ENCODE measurements at regions of chr11 and their contacts with region 1.

Region 1: GRCh38 chr11:124194698-124195410 is 11.7 kb downstream of the OR10D3 start:
- DNase-seq: no peak
- H3K4me3 ChIP-seq: no peak overlapping the region
- H3K27ac ChIP-seq: peak overlapping the region; percentile 10 to 29 (median 13)
- H3K4me1 ChIP-seq: peaks cover 0 to 6% (median 0%) of the 10 kb centered on the region in 4 donors
- H3K27me3 ChIP-seq: no peaks in the 10 kb centered on the region
- CTCF ChIP-seq: peak; percentile 35 to 54 (median 46)
- EP300 ChIP-seq: no peak
- POLR2A ChIP-seq: no peak

Region 2: GRCh38 chr11:123885570-123885969 is 309.3 kb before region 1 on chr11 and contains the start of gene TMEM225:
- intact Hi-C with region 1: no loop called
- DNase-seq: no peak
- H3K4me3 ChIP-seq: no peak within 1 kb of the TSS
- H3K27ac ChIP-seq: no peak within 1 kb of the TSS
- H3K4me1 ChIP-seq: no peaks in the 10 kb centered on the region
- H3K27me3 ChIP-seq: no peaks in the 10 kb centered on the region
- CTCF ChIP-seq: no peak
- EP300 ChIP-seq: no peak
- POLR2A ChIP-seq: no peak
- total RNA-seq, gene TMEM225: not detected

Region 3: GRCh38 chr11:123939317-123939716 is 255.5 kb before region 1 on chr11 and contains the start of gene OR4D5:
- intact Hi-C with region 1: no loop called
- DNase-seq: no peak
- H3K4me3 ChIP-seq: no peak within 1 kb of the TSS
- H3K27ac ChIP-seq: no peak within 1 kb of the TSS
- H3K4me1 ChIP-seq: no peaks in the 10 kb centered on the region
- H3K27me3 ChIP-seq: no peaks in the 10 kb centered on the region
- CTCF ChIP-seq: no peak
- EP300 ChIP-seq: no peak
- POLR2A ChIP-seq: no peak
- total RNA-seq, gene OR4D5: not detected

Region 4: GRCh38 chr11:124026498-124026897 is 168.4 kb before region 1 on chr11 and contains the start of gene OR10G8:
- intact Hi-C with region 1: no loop called
- DNase-seq: no peak
- H3K4me3 ChIP-seq: no peak within 1 kb of the TSS
- H3K27ac ChIP-seq: no peak within 1 kb of the TSS
- H3K4me1 ChIP-seq: no peaks in the 10 kb centered on the region
- H3K27me3 ChIP-seq: no peaks in the 10 kb centered on the region
- CTCF ChIP-seq: no peak
- EP300 ChIP-seq: no peak
- POLR2A ChIP-seq: no peak
- total RNA-seq, gene OR10G8: not detected

Region 5: DNA sequence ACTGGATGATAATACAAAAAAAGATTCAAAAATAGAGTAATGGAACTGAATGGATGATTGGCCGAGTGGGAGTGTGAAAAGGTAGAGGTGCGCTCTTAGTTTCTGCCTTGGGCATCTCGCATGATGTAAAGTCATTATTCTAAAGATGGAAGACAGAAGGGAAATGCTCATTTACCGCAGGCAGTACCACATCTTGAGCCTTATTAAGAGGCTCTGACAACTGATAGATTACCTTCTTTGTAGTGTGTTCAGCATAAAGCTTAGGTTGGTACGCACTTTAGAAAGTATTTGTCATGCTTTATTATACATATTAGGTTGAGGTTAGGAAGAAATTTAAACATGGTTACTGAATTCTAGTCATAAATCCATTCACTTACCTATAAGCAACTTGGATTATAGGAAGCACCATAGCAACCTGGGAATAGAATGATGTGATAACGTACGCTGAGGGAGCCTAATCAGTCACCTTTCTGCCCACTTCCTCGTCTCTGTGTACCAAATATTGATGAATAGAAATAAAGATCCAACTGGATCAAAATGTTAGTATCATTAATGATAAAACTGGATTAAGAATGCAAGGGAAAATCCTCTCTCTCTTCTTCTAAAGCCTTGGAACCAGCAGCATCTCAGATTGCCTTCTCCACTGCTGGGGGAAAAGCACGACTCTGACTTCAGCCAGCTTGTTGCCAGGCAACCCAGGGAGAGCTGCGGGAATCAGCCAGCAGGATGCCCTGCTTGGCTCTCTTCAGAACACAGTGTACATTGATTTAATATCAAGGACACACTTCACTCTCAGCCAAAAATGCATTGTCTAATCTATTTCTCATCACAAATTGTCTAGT is 108.6 kb before region 1 on chr11:
- intact Hi-C with region 1: loop called (anchors 10 kb)
- DNase-seq: no peak
- H3K4me3 ChIP-seq: no peak overlapping the region
- H3K27ac ChIP-seq: no peak overlapping the region
- H3K4me1 ChIP-seq: no peaks in the 10 kb centered on the region
- H3K27me3 ChIP-seq: peaks cover 0 to 37% (median 0%) of the 10 kb centered on the region in 4 donors
- CTCF ChIP-seq: no peak
- EP300 ChIP-seq: no peak
- POLR2A ChIP-seq: no peak

Measured in esophagus muscularis mucosa (tissue), 4 donors.